ENCODE measurements at regions of chr18 and their contacts with region 1.

Region 1: DNA sequence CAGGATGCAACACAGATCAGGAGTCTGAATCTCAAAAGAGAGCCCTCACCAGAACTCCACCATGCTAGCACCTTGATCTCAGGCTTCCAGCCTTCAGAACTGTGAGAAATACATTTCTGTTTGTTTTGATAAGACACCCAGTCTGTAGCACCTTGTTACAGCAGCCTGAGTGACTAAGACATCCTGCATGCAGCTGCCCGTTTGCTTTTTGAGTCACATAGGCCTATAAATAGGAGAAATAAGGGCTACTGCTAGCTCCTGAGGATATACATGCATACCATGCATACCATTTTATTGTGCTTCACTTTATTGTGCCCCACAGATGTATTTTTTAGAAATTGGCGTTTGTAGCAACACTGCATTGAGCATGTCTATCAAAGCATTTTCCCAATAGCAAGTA is 337.8 kb downstream of the CDH2 start:
- DNase-seq: no peak
- ATAC-seq: no peak
- H3K4me3 ChIP-seq: no peak overlapping the region
- H3K27ac ChIP-seq: no peak overlapping the region
- H3K4me1 ChIP-seq: no peaks in the 10 kb centered on the region
- H3K27me3 ChIP-seq: no peaks in the 10 kb centered on the region
- CTCF ChIP-seq: no peak
- POLR2A ChIP-seq: no peak

Region 2: GRCh38 chr18:27899893-27900292 is 60.8 kb after region 1 on chr18:
- intact Hi-C with region 1: loop called in 1 of 10 experiments (anchors 10 kb)
- DNase-seq: no peak
- ATAC-seq: no peak
- H3K4me3 ChIP-seq: no peak overlapping the region
- H3K27ac ChIP-seq: no peak overlapping the region
- H3K4me1 ChIP-seq: no peaks in the 10 kb centered on the region
- H3K27me3 ChIP-seq: no peaks in the 10 kb centered on the region
- CTCF ChIP-seq: no peak
- POLR2A ChIP-seq: no peak